BJ (cell line): ENCODE measurements at regions of chr1 and their contacts with region 1.

Region 1: GRCh38 chr1:93722081-93723031 is 40.7 kb upstream of the BCAR3 start:
- DNase-seq: no peak
- H3K4me3 ChIP-seq: no peak overlapping the region
- H3K27me3 ChIP-seq: no peaks in the 10 kb centered on the region
- CTCF ChIP-seq: no peak

Region 2: GRCh38 chr1:93734999-93735398 is 12.6 kb after region 1 on chr1:
- CTCF ChIA-PET with region 1: interaction called, 33 read pairs
- POLR2A ChIA-PET with region 1: no interaction called
- DNase-seq: no peak
- H3K4me3 ChIP-seq: no peak overlapping the region
- H3K27me3 ChIP-seq: no peaks in the 10 kb centered on the region
- CTCF ChIP-seq: peak; percentile 52